Activated CD4-positive, alpha-beta memory T cell treated with anti-CD3 and anti-CD28 coated beads, Interleukin-2, amount 10 ng/mL, durations not matched to agents 7 days and 5 days (primary cell): ENCODE measurements at regions of chr1 and their contacts with region 1.

Region 1: GRCh38 chr1:168421399-168422004 is 122.3 kb downstream of the XCL2 start:
- DNase-seq: peak; percentile 41
- H3K4me3 Mint-ChIP-seq: peak overlapping the region; percentile 45
- H3K27ac Mint-ChIP-seq: peak overlapping the region; percentile 86
- H3K4me1 Mint-ChIP-seq: peaks cover 42% of the 10 kb centered on the region
- H3K27me3 Mint-ChIP-seq: peaks cover 2% of the 10 kb centered on the region

Region 2: DNA sequence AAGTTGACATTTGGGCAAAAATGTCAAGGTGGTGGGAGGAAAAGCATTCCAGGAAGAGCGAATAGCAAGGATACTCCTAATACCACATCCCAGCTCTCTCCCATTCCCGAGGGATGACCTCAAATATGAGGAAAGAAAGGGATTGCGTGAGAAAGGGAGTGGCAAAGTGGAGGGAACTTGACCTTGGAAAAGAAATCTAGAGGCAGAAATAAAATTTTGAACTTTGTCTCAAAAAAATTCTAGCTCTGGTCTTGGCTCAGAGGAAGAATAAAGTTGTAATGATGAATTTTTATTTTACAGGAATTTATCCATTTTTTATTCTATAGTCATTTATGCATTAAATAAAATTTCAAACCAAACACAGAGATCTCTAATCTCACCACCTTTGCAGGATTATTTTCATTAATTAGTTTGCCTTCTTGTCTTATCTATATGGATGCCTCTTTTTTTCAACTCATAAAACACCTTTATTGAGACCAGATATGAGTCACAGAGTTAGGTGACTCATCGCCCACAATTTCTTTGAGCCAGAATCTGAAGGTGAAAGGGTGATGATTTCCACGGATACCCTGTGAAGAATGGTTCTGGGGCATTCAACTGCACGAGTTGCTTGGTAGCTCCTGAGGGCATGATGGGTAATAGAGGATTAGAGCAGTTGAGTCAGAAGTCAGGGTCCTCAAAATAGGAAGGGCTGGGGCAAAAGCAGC is 12.8 kb before region 1 on chr1:
- CTCF ChIA-PET with region 1: interaction called, 3 read pairs
- POLR2A ChIA-PET with region 1: interaction called, 25 read pairs
- DNase-seq: peak; percentile 73
- H3K4me3 Mint-ChIP-seq: peak overlapping the region; percentile 26
- H3K27ac Mint-ChIP-seq: peak overlapping the region; percentile 86
- H3K4me1 Mint-ChIP-seq: peaks cover 56% of the 10 kb centered on the region
- H3K27me3 Mint-ChIP-seq: no peaks in the 10 kb centered on the region

Region 3: DNA sequence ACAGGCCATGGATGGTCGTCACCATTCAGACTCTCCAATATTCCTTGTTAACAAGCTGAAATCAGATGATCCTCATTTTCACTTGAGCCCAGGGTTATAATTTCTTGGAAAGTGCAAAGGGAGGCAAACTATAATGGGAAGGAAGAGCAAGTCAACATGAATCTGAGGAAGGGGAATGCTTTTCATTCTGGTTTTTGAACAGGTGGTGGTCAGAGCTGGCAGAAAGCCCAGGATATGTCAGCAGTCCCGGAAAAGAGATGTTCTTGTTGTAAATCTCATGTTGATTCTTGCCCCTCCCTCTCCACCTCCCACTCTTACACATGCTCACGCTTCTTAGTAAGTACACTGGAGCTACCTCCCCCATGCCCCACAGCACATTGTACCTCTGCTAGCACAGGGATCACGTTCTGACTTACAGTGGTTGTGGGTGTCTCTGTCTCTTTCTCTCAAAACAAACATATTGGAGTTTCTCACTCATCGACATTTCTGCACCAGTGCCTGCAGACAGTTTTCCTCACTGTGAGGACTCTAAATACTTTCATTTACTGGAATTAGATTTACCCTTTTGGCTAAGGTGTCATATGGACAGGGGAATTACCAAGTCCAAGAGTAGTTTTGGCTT is 44.7 kb after region 1 on chr1:
- CTCF ChIA-PET with region 1: no interaction called
- POLR2A ChIA-PET with region 1: interaction called, 10 read pairs
- DNase-seq: peak; percentile 44
- H3K4me3 Mint-ChIP-seq: no peak overlapping the region
- H3K27ac Mint-ChIP-seq: peak overlapping the region; percentile 82
- H3K4me1 Mint-ChIP-seq: peaks cover 62% of the 10 kb centered on the region
- H3K27me3 Mint-ChIP-seq: peaks cover 6% of the 10 kb centered on the region